ENCODE measurements at regions of chr4 and their contacts with region 1.

Region 1: GRCh38 chr4:6264225-6264540 is 5.5 kb upstream of the WFS1 start:
- DNase-seq: peak; percentile 61
- ATAC-seq: peak; percentile 88
- H3K4me3 ChIP-seq: no peak overlapping the region
- H3K27ac ChIP-seq: no peak overlapping the region
- H3K4me1 ChIP-seq: no peaks in the 10 kb centered on the region; the same call in 1 of the 2 replicates
- H3K27me3 ChIP-seq: no peaks in the 10 kb centered on the region
- CTCF ChIP-seq: peak; percentile 72

Region 2: DNA sequence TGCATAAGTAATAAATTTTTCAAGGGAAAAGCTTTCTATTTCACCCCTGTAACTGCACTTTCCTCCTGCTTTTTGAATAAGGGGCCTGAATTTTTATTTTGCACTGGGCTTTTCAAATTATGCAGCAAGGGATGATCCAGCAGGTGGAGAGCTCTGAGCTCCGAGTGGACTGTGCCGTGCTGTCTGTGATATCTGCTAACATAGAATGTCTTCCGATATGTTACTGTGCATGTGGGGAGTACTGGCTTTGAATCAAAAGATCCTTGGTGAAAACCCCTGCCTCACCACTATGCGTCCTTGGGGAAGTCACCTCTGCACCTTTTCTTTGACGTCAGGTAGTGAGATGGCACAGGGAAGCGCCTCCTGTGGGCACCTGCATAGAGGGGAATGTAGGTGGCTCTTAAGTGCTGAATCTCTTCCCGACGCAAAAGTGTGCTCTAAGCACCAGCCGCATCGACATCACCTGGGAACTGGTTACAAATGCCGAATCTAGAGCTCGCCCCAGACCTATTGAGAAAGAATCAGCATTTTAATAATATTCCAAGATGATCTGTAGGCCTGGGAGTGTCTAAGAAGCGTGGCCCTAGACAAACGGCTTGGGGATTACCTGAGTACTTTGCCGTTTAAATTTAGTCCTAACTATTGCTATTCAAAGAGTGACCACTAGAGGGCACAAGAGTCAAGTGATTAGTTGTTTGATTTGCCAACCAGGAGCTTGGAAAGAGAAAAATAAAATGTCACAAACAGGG is 13.8 kb before region 1 on chr4:
- CTCF ChIA-PET with region 1: interaction called, 13 read pairs
- POLR2A ChIA-PET with region 1: no interaction called
- intact Hi-C with region 1: no loop called
- DNase-seq: peak; percentile 85
- ATAC-seq: peak; percentile 70
- H3K4me3 ChIP-seq: peak overlapping the region; percentile 16; the same call in 1 of the 2 replicates
- H3K27ac ChIP-seq: no peak overlapping the region
- H3K4me1 ChIP-seq: no peaks in the 10 kb centered on the region
- H3K27me3 ChIP-seq: no peaks in the 10 kb centered on the region
- CTCF ChIP-seq: peak; percentile 78

Region 3: GRCh38 chr4:6327041-6327917 is 63.1 kb after region 1 on chr4:
- CTCF ChIA-PET with region 1: interaction called, 6 read pairs
- POLR2A ChIA-PET with region 1: no interaction called
- intact Hi-C with region 1: loop called (anchors 1 kb)
- DNase-seq: peak; percentile 69
- ATAC-seq: peak; percentile 73
- H3K4me3 ChIP-seq: no peak overlapping the region
- H3K27ac ChIP-seq: no peak overlapping the region
- H3K4me1 ChIP-seq: peaks cover 18% of the 10 kb centered on the region
- H3K27me3 ChIP-seq: no peaks in the 10 kb centered on the region
- CTCF ChIP-seq: peak; percentile 77

Region 4: GRCh38 chr4:6423575-6423974 is 159.4 kb after region 1 on chr4:
- CTCF ChIA-PET with region 1: no interaction called
- POLR2A ChIA-PET with region 1: no interaction called
- intact Hi-C with region 1: no loop called
- DNase-seq: no peak
- ATAC-seq: no peak
- H3K4me3 ChIP-seq: no peak overlapping the region
- H3K27ac ChIP-seq: no peak overlapping the region
- H3K4me1 ChIP-seq: no peaks in the 10 kb centered on the region
- H3K27me3 ChIP-seq: no peaks in the 10 kb centered on the region
- CTCF ChIP-seq: no peak

Region 5: GRCh38 chr4:7394673-7395451 is 1130.7 kb after region 1 on chr4:
- CTCF ChIA-PET with region 1: no interaction called
- POLR2A ChIA-PET with region 1: interaction called, 18 read pairs
- intact Hi-C with region 1: no loop called
- DNase-seq: no peak
- ATAC-seq: no peak
- H3K4me3 ChIP-seq: no peak overlapping the region
- H3K27ac ChIP-seq: no peak overlapping the region
- H3K4me1 ChIP-seq: peaks cover 15% of the 10 kb centered on the region; the same call in 1 of the 2 replicates
- H3K27me3 ChIP-seq: no peaks in the 10 kb centered on the region
- CTCF ChIP-seq: no peak

Measured in PC-3 (cell line).